Naive thymus-derived CD4-positive, alpha-beta T cell (primary cell): ENCODE measurements at regions of chr1 and their contacts with region 1.

Region 1: DNA sequence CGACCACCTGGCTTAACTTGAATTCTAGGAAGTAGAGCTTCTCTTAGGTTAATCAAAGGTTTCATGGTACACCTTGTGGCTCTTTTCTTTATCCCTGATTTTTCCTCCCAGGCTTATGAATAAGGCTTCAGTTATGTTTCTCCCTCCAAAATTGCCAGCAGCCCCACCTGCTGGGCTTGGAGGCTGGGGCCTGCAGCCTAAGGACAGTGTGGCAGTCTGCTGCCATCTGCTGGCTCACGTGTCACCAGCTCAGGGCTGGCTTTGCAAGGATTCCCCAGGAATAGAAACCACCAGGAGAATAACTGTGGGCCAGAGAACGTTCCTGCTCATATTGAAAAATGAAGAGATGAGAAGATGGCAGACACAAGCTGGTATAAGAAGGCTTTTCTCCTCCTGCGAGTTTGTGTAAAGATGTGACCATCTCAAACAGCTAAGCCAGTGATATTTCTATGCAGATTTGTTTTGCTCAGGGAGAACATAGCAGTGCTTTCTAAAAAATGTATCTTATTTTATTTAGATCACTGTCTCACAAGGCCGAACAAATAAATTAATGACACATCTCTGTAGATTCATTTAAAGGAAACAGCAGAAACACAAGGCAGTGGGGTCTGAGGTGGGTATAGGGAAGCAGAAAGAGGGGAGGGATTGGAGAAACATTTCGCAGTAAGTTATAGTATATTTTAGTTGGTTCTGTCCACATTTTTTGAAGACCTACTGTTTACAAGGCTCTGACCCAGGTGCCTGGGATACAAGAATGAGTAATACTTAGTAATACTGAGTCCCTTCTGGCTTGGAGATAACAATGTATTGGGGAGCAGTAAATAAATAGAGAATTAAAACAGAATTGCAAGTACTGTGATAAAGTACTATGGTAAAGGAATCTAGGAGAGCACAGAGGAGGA is 291.1 kb upstream of the SGIP1 start:
- DNase-seq: peak; percentile 43 to 75 (median 65)
- ATAC-seq: peak; percentile 93
- H3K4me3 ChIP-seq: no peak overlapping the region
- H3K4me3 Mint-ChIP-seq: no peak overlapping the region
- H3K27ac ChIP-seq: no peak overlapping the region
- H3K27ac Mint-ChIP-seq: no peak overlapping the region
- H3K4me1 ChIP-seq: peaks cover 17 to 36% of the 10 kb centered on the region in 2 donors
- H3K4me1 Mint-ChIP-seq: peaks cover 7 to 31% (median 15%) of the 10 kb centered on the region in 7 donors
- H3K27me3 ChIP-seq: no peaks in the 10 kb centered on the region
- H3K27me3 Mint-ChIP-seq: peaks cover 6 to 7% (median 6%) of the 10 kb centered on the region in 5 donors

Region 2: DNA sequence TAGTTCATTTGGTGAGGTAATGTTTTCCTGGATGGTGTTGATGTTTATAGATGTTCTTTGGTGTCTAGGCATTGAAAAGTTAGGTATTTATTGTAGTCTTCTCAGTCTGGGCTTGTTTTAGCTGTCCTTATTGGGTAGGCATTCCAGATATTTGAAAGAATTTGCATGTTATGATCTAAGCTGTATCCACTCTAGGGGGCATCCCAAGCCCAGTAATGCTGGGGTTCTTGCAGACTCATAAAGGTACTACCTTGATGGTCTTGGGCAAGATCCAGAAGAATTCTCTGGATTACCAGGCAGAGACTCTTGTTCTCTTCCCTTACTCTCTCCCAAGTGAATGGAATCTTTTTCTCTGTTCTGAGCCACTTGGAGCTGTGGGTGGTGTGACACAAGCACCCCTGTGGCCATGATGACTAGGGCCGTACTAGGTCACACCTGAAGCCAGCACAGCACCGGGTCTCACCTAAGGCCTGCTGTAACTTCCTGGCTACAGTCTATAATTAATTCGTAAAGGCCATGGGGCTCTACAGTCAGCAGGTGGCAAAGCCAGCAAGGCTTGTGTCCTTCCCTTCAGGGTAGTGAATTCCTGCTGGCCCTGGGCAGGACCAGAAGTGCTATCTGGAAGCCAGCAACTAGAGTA is 525.0 kb before region 1 on chr1:
- CTCF ChIA-PET with region 1: no interaction called
- POLR2A ChIA-PET with region 1: no interaction called
- intact Hi-C with region 1: loop called in 1 of 2 experiments (anchors 2 kb)
- DNase-seq: no peak
- ATAC-seq: no peak
- H3K4me3 ChIP-seq: no peak overlapping the region
- H3K4me3 Mint-ChIP-seq: no peak overlapping the region
- H3K27ac ChIP-seq: no peak overlapping the region
- H3K27ac Mint-ChIP-seq: no peak overlapping the region
- H3K4me1 ChIP-seq: no peaks in the 10 kb centered on the region
- H3K4me1 Mint-ChIP-seq: peaks cover 0 to 2% (median 0%) of the 10 kb centered on the region in 7 donors
- H3K27me3 ChIP-seq: no peaks in the 10 kb centered on the region
- H3K27me3 Mint-ChIP-seq: peaks cover 9 to 36% (median 12%) of the 10 kb centered on the region in 5 donors

Region 3: GRCh38 chr1:65958561-65959350 is 284.1 kb before region 1 on chr1:
- CTCF ChIA-PET with region 1: interaction called, 80 read pairs
- POLR2A ChIA-PET with region 1: interaction called, 3 read pairs
- intact Hi-C with region 1: loop called (anchors 1 kb)
- DNase-seq: peak in 7 of 9 donors; percentile 23 to 75 (median 64)
- ATAC-seq: peak; percentile 80
- H3K4me3 ChIP-seq: no peak overlapping the region
- H3K4me3 Mint-ChIP-seq: no peak overlapping the region
- H3K27ac ChIP-seq: no peak overlapping the region
- H3K27ac Mint-ChIP-seq: no peak overlapping the region
- H3K4me1 ChIP-seq: no peaks in the 10 kb centered on the region
- H3K4me1 Mint-ChIP-seq: peaks cover 0 to 12% (median 0%) of the 10 kb centered on the region in 7 donors
- H3K27me3 ChIP-seq: no peaks in the 10 kb centered on the region
- H3K27me3 Mint-ChIP-seq: peaks cover 0 to 7% (median 3%) of the 10 kb centered on the region in 5 donors

Region 4: GRCh38 chr1:66182551-66183178 is 60.2 kb before region 1 on chr1:
- CTCF ChIA-PET with region 1: interaction called, 3 read pairs
- POLR2A ChIA-PET with region 1: no interaction called
- intact Hi-C with region 1: loop called in 1 of 2 experiments (anchors 2 kb)
- DNase-seq: peak in 8 of 9 donors; percentile 15 to 69 (median 40)
- ATAC-seq: peak; percentile 82
- H3K4me3 ChIP-seq: no peak overlapping the region
- H3K4me3 Mint-ChIP-seq: peak overlapping the region in 5 of 10 donors; percentile 8 to 73 (median 24)
- H3K27ac ChIP-seq: no peak overlapping the region
- H3K27ac Mint-ChIP-seq: peak overlapping the region in 7 of 9 donors; percentile 7 to 81 (median 49)
- H3K4me1 ChIP-seq: peaks cover 0 to 10% of the 10 kb centered on the region in 2 donors
- H3K4me1 Mint-ChIP-seq: peaks cover 0 to 35% (median 22%) of the 10 kb centered on the region in 7 donors
- H3K27me3 ChIP-seq: no peaks in the 10 kb centered on the region
- H3K27me3 Mint-ChIP-seq: peaks cover 0 to 3% (median 0%) of the 10 kb centered on the region in 5 donors

Region 5: DNA sequence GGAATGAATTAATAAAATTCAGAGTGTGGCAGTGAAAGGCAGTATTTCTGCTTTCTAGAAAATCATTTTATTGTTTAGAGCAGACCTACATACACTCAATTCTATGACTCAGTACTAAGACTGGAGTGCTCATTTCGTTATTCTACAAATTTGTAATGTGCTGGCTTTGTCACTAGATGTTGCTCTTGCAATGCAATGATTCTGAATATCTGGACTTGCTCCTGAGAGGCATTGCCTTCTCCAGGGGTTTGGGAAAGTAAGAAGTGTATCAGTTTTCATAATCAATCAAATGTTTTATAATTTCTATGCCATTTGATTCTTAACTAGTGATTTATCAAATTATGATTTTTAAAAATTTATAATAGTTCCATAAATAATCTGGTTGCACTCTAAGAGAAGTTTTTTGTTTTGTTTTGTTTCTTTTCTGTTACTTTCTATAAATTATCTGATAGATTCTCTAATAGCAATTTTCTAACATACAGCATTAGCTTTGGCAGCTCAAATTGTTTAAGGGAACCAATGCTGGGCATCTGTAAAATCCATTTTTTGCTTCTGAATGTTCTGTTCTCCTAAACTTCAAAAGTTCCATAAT is 10.5 kb after region 1 on chr1:
- CTCF ChIA-PET with region 1: interaction called, 20 read pairs
- POLR2A ChIA-PET with region 1: no interaction called
- intact Hi-C with region 1: no loop called
- DNase-seq: peak in 6 of 9 donors; percentile 29 to 58 (median 46)
- ATAC-seq: peak; percentile 83
- H3K4me3 ChIP-seq: no peak overlapping the region
- H3K4me3 Mint-ChIP-seq: no peak overlapping the region
- H3K27ac ChIP-seq: no peak overlapping the region
- H3K27ac Mint-ChIP-seq: peak overlapping the region in 2 of 9 donors; percentile 19 to 64
- H3K4me1 ChIP-seq: peaks cover 10 to 12% of the 10 kb centered on the region in 2 donors
- H3K4me1 Mint-ChIP-seq: peaks cover 6 to 57% (median 19%) of the 10 kb centered on the region in 7 donors
- H3K27me3 ChIP-seq: no peaks in the 10 kb centered on the region
- H3K27me3 Mint-ChIP-seq: no peaks in the 10 kb centered on the region

Region 6: DNA sequence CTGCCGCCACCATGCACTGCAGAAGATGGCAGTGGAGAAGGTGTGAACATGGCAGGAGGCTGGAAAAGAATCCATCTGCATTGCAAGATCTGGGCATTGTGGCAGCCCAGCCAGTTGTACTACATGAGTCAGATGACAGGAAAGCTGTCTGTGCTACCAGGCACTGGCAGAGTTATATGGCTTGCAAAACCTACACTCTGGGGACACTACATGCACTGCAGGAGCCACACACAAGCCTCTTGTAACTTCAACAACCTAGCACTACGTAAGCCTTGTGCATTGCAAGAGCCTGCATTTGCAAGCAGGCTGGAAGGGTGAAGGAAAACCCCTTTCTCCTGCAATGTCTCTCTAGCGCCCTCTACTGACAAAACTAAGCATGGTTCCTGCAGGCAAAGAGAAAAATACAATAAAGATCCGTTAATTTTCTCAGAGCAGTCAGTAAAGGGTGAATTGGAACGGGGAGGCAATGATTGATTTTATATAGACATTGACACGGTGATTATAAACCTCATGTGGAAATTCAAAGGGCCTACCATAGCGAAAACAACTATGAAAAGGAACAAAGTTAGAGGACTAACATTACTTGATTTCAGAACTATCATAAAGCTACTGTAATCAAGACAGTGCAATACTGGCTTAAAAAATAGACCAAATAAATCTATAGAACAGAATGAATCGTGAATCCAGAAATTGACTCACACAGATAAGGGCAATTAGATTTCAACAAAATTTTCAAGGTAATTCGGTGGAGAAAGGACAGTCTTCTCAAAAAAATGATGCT is 483.2 kb after region 1 on chr1:
- CTCF ChIA-PET with region 1: no interaction called
- POLR2A ChIA-PET with region 1: no interaction called
- intact Hi-C with region 1: loop called in 1 of 2 experiments (anchors 2 kb)
- DNase-seq: peak; percentile 10 to 75 (median 61)
- ATAC-seq: peak; percentile 87
- H3K4me3 ChIP-seq: no peak overlapping the region
- H3K4me3 Mint-ChIP-seq: no peak overlapping the region
- H3K27ac ChIP-seq: no peak overlapping the region
- H3K27ac Mint-ChIP-seq: peak overlapping the region in 1 of 9 donors; percentile 14
- H3K4me1 ChIP-seq: peaks cover 0 to 3% of the 10 kb centered on the region in 2 donors
- H3K4me1 Mint-ChIP-seq: peaks cover 8 to 23% (median 16%) of the 10 kb centered on the region in 7 donors
- H3K27me3 ChIP-seq: peaks cover 0 to 2% of the 10 kb centered on the region in 2 donors
- H3K27me3 Mint-ChIP-seq: peaks cover 9 to 28% (median 13%) of the 10 kb centered on the region in 5 donors